Activated naive CD4-positive, alpha-beta T cell treated with anti-CD3 and anti-CD28 coated beads for 36 hours (primary cell): ENCODE measurements at regions of chr12 and their contacts with region 1.

Region 1: GRCh38 chr12:89756585-89757321 is 48.1 kb upstream of the ATP2B1 start:
- DNase-seq: peak; percentile 48
- H3K4me3 Mint-ChIP-seq: no peak overlapping the region
- H3K27ac Mint-ChIP-seq: peak overlapping the region; percentile 37
- H3K4me1 Mint-ChIP-seq: peaks cover 23% of the 10 kb centered on the region
- H3K27me3 Mint-ChIP-seq: no peaks in the 10 kb centered on the region

Region 2: GRCh38 chr12:88141770-88142609 is 1614.8 kb before region 1 on chr12 and contains the starts of genes CEP290 and TMTC3:
- CTCF ChIA-PET with region 1: no interaction called
- intact Hi-C with region 1: loop called (anchors 5 kb)
- DNase-seq: peak; percentile 95
- H3K4me3 Mint-ChIP-seq: peak within 1 kb of the TSS; percentile 91
- H3K27ac Mint-ChIP-seq: peak within 1 kb of the TSS; percentile 90
- H3K4me1 Mint-ChIP-seq: peaks cover 40% of the 10 kb centered on the region
- H3K27me3 Mint-ChIP-seq: no peaks in the 10 kb centered on the region
- total RNA-seq, gene CEP290: 12.7 to 13.6 TPM
- total RNA-seq, gene TMTC3: 5.2 TPM

Region 3: DNA sequence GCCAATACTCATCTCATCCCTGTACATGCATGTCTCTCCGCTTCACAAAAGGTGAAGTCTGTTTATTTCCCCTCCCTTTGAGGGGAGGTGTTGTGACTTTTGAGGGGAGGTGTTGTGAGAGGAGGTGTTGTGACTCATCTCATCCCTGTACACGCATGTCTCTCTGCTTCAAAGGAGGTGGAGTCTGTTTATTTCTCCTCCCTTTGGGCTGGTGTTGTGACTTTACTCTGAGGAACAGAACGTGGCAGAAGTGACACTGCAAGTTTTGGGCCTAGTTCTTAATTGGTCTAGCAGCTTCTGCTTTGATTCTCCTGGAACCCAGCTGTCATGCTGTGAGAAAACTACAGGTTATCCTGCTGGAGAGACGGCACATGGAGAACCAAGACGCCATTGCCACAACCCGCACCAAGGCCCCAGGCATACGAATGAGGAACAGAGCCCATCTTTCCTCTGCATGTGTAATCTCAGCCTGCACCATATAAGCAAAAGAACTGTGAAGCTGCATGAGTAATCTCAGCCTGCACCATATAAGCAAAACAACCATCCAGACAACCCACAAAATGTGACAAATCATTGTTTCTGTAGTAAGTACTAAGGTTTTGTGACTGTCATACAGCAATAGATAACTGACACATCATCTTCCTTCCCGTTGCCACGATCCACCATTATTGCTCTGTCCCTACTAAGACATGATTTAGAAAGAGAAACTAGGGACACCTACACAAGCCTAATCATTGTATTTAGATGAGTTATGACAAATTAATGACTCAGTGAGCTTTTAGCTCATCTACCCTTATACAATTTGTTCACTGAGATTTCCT is 262.1 kb before region 1 on chr12:
- CTCF ChIA-PET with region 1: no interaction called
- intact Hi-C with region 1: loop called (anchors 1 kb)
- DNase-seq: peak; percentile 73
- H3K4me3 Mint-ChIP-seq: peak overlapping the region; percentile 5
- H3K27ac Mint-ChIP-seq: peak overlapping the region; percentile 77
- H3K4me1 Mint-ChIP-seq: peaks cover 17% of the 10 kb centered on the region
- H3K27me3 Mint-ChIP-seq: no peaks in the 10 kb centered on the region

Region 4: GRCh38 chr12:89709157-89709994 is 47.4 kb before region 1 on chr12:
- CTCF ChIA-PET with region 1: no interaction called
- intact Hi-C with region 1: loop called (anchors 1 kb)
- DNase-seq: peak; percentile 99
- H3K4me3 Mint-ChIP-seq: peak overlapping the region; percentile 79
- H3K27ac Mint-ChIP-seq: peak overlapping the region; percentile 71
- H3K4me1 Mint-ChIP-seq: peaks cover 32% of the 10 kb centered on the region
- H3K27me3 Mint-ChIP-seq: no peaks in the 10 kb centered on the region

Region 5: GRCh38 chr12:89882050-89882449 is 125.3 kb after region 1 on chr12:
- CTCF ChIA-PET with region 1: no interaction called
- intact Hi-C with region 1: loop called (anchors 1 kb)
- DNase-seq: peak; percentile 53
- H3K4me3 Mint-ChIP-seq: no peak overlapping the region
- H3K27ac Mint-ChIP-seq: peak overlapping the region; percentile 63
- H3K4me1 Mint-ChIP-seq: peaks cover 42% of the 10 kb centered on the region
- H3K27me3 Mint-ChIP-seq: no peaks in the 10 kb centered on the region

Region 6: DNA sequence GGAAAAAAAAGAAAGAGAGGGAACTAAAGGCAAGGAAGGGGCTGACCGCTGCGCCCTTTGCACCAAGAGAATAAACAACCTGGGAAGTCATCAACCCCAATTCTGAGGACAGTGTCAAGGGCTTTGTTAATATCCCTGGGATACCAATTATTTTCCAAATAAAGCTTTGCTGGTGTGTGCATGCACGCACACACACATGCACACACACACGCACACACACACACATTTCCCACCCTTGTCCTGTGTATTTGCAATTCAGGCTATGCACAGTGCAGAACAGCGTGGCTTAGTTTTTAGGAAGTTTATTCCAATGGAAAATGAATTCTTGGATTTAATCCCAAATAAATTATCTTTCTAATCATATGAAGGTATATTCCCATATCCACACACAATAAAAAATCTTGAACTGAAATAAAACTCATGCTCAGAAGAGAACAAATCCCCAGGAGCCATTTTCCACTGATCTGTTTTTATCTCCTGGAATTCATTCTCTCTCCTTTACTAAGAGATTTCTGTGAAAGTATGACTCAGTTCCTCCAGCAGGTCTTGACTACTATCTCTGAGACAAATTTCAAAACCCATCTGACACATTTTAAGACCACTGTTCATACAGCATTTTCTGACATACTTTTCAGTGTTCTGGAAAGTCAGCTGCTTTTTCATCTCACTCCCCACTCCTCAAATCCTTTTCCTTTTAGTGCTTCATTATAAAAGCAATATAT is 286.3 kb after region 1 on chr12:
- CTCF ChIA-PET with region 1: no interaction called
- intact Hi-C with region 1: loop called (anchors 5 kb)
- DNase-seq: no peak
- H3K4me3 Mint-ChIP-seq: no peak overlapping the region
- H3K27ac Mint-ChIP-seq: no peak overlapping the region
- H3K4me1 Mint-ChIP-seq: peaks cover 9% of the 10 kb centered on the region
- H3K27me3 Mint-ChIP-seq: no peaks in the 10 kb centered on the region